ENCODE measurements at regions of chr1 and their contacts with region 1.

Region 1: DNA sequence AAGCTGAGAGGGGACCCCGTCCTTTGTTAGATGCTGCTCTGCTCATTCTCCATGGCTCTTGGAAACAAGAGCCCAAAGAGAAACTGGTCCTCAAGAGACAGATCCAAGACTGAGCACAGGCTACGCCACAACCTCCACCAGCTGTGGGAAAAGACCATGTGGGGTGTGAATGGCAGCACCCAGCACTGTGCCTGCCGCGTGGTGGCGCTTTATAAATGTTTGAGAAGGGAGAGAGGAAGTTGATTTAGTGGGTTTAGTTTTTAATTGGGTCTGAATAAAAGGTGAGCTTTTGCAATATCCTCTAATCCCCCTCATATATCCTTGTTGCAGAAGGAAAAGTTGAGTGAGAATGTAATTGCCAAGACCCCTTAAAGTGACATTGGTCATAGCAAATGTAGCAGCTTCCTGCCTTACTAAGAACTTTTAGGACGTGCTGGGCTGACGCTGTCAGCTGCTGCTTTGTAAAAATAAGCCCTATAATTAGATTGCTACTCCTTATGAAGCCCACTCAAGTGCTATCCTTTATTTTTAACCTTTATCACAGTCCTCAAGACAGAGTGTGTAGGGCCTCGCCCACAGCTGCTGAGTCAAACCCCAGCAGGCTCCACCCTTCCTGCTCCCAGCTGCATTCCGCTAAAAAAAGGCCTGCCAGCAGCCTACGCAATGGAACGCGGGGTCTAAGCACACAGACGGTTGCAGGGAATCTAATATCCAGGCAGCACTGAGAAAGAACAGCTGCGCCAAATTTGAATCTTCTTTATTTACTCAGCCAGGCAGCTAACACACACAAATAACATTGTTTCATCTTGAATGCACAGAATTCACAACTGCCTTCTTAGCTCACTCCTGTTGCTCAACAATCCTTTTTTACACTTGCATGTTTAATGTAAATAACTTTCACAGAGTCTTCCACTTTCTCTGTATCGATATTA is 47.4 kb upstream of the PRDX6 start:
- DNase-seq: peak; percentile 50 to 62 (median 59)
- H3K4me3 ChIP-seq: peak overlapping the region in 1 of 2 donors; percentile 26
- H3K4me3 Mint-ChIP-seq: peak overlapping the region; percentile 14 to 76 (median 60)
- H3K27ac ChIP-seq: peak overlapping the region; percentile 11
- H3K27ac Mint-ChIP-seq: peak overlapping the region; percentile 22 to 87 (median 75)
- H3K4me1 ChIP-seq: peaks cover 17% of the 10 kb centered on the region
- H3K4me1 Mint-ChIP-seq: peaks cover 16 to 26% (median 16%) of the 10 kb centered on the region in 4 donors
- H3K27me3 ChIP-seq: no peaks in the 10 kb centered on the region
- H3K27me3 Mint-ChIP-seq: no peaks in the 10 kb centered on the region

Region 2: DNA sequence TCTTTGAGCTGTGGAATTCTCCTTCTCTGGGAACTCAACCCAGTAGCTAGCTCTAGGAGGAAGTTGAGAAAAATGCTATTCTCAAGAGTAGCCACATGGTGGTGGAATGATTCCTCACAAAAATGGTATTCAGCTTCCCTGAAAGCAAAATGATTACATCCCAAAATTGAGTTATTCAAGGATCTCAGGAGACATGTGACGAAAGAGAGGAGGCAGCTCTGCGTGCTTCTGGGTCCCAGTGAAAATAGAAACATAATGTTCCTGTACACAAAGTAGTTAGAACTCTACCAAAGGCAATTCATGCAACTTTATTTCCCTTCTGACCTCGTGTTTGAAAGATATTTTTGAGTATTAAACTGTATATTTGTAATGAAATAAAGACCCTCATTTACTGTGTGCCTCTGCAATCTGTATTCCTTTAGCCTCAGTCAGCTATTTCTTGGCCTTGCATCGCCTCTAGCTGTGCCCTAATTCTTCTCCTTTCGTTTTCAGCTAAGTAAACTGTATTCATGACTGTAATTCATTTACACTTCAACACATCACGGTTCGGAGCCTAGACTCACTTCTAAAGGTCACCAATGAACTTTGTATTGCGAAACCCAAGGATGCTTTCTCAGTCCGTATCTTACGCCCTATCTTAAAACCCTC is 603.5 kb before region 1 on chr1:
- CTCF ChIA-PET with region 1: interaction called, 12 read pairs
- POLR2A ChIA-PET with region 1: no interaction called
- intact Hi-C with region 1: no loop called
- DNase-seq: peak in 1 of 5 donors; percentile 15
- H3K4me3 ChIP-seq: no peak overlapping the region
- H3K4me3 Mint-ChIP-seq: no peak overlapping the region
- H3K27ac ChIP-seq: no peak overlapping the region
- H3K27ac Mint-ChIP-seq: no peak overlapping the region
- H3K4me1 ChIP-seq: peaks cover 24% of the 10 kb centered on the region
- H3K4me1 Mint-ChIP-seq: no peaks in the 10 kb centered on the region
- H3K27me3 ChIP-seq: no peaks in the 10 kb centered on the region
- H3K27me3 Mint-ChIP-seq: no peaks in the 10 kb centered on the region

Region 3: GRCh38 chr1:173341307-173341706 is 88.4 kb before region 1 on chr1:
- CTCF ChIA-PET with region 1: no interaction called
- POLR2A ChIA-PET with region 1: no interaction called
- intact Hi-C with region 1: no loop called
- DNase-seq: no peak
- H3K4me3 ChIP-seq: no peak overlapping the region
- H3K4me3 Mint-ChIP-seq: no peak overlapping the region
- H3K27ac ChIP-seq: no peak overlapping the region
- H3K27ac Mint-ChIP-seq: no peak overlapping the region
- H3K4me1 ChIP-seq: no peaks in the 10 kb centered on the region
- H3K4me1 Mint-ChIP-seq: no peaks in the 10 kb centered on the region
- H3K27me3 ChIP-seq: no peaks in the 10 kb centered on the region
- H3K27me3 Mint-ChIP-seq: no peaks in the 10 kb centered on the region

Region 4: GRCh38 chr1:173476664-173477285 is 47.0 kb after region 1 on chr1:
- CTCF ChIA-PET with region 1: interaction called, 41 read pairs
- POLR2A ChIA-PET with region 1: interaction called, 17 read pairs
- intact Hi-C with region 1: loop called (anchors 1 kb)
- DNase-seq: peak; percentile 77 to 90 (median 84)
- H3K4me3 ChIP-seq: peak overlapping the region; percentile 93
- H3K4me3 Mint-ChIP-seq: peak overlapping the region; percentile 89 to 94 (median 91)
- H3K27ac ChIP-seq: peak overlapping the region; percentile 89
- H3K27ac Mint-ChIP-seq: peak overlapping the region; percentile 89 to 95 (median 91)
- H3K4me1 ChIP-seq: peaks cover 61% of the 10 kb centered on the region
- H3K4me1 Mint-ChIP-seq: peaks cover 38 to 68% (median 55%) of the 10 kb centered on the region in 4 donors
- H3K27me3 ChIP-seq: no peaks in the 10 kb centered on the region
- H3K27me3 Mint-ChIP-seq: no peaks in the 10 kb centered on the region

Region 5: GRCh38 chr1:173554541-173555250 is 125.0 kb after region 1 on chr1:
- CTCF ChIA-PET with region 1: no interaction called
- POLR2A ChIA-PET with region 1: no interaction called
- intact Hi-C with region 1: no loop called
- DNase-seq: no peak
- H3K4me3 ChIP-seq: no peak overlapping the region
- H3K4me3 Mint-ChIP-seq: no peak overlapping the region
- H3K27ac ChIP-seq: no peak overlapping the region
- H3K27ac Mint-ChIP-seq: peak overlapping the region in 1 of 7 donors; percentile 15
- H3K4me1 ChIP-seq: peaks cover 32% of the 10 kb centered on the region
- H3K4me1 Mint-ChIP-seq: peaks cover 24 to 52% (median 37%) of the 10 kb centered on the region in 4 donors
- H3K27me3 ChIP-seq: no peaks in the 10 kb centered on the region
- H3K27me3 Mint-ChIP-seq: no peaks in the 10 kb centered on the region

Region 6: GRCh38 chr1:173628888-173629287 is 199.2 kb after region 1 on chr1:
- CTCF ChIA-PET with region 1: no interaction called
- POLR2A ChIA-PET with region 1: no interaction called
- intact Hi-C with region 1: loop called (anchors 2 kb)
- DNase-seq: no peak
- H3K4me3 ChIP-seq: no peak overlapping the region
- H3K4me3 Mint-ChIP-seq: no peak overlapping the region
- H3K27ac ChIP-seq: no peak overlapping the region
- H3K27ac Mint-ChIP-seq: no peak overlapping the region
- H3K4me1 ChIP-seq: no peaks in the 10 kb centered on the region
- H3K4me1 Mint-ChIP-seq: no peaks in the 10 kb centered on the region
- H3K27me3 ChIP-seq: no peaks in the 10 kb centered on the region
- H3K27me3 Mint-ChIP-seq: peaks cover 0 to 5% of the 10 kb centered on the region in 2 donors

Region 7: DNA sequence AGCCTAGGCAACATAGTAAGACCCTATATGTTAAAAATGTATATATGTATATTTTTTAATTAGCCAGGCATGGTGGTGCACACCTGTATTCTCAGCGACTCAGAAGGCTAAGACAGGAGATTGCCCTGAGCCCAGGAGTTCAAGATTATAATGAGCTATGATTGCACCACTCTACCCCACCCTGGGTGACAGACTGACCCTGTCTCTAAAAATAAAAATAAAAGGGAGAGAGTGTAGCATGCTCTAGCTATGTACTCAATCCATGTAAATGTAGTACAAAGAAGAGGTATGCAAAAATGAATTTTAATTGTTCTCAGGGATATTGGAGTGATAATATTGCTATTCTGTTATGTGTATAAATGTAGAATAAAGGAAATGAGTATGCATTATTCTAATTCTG is 341.8 kb after region 1 on chr1:
- CTCF ChIA-PET with region 1: interaction called, 11 read pairs
- POLR2A ChIA-PET with region 1: no interaction called
- intact Hi-C with region 1: loop called (anchors 5 kb)
- DNase-seq: no peak
- H3K4me3 ChIP-seq: no peak overlapping the region
- H3K4me3 Mint-ChIP-seq: no peak overlapping the region
- H3K27ac ChIP-seq: no peak overlapping the region
- H3K27ac Mint-ChIP-seq: peak overlapping the region in 2 of 7 donors; percentile 14 to 48
- H3K4me1 ChIP-seq: peaks cover 19% of the 10 kb centered on the region
- H3K4me1 Mint-ChIP-seq: peaks cover 17 to 25% (median 22%) of the 10 kb centered on the region in 4 donors
- H3K27me3 ChIP-seq: no peaks in the 10 kb centered on the region
- H3K27me3 Mint-ChIP-seq: no peaks in the 10 kb centered on the region

Region 8: GRCh38 chr1:173824331-173825081 is 394.8 kb after region 1 on chr1 and contains the starts of genes CENPL and DARS2:
- CTCF ChIA-PET with region 1: interaction called, 70 read pairs
- POLR2A ChIA-PET with region 1: interaction called, 28 read pairs
- intact Hi-C with region 1: no loop called
- DNase-seq: peak; percentile 92 to 96 (median 93)
- H3K4me3 ChIP-seq: peak within 1 kb of the TSS; percentile 93 to 95
- H3K4me3 Mint-ChIP-seq: peak within 1 kb of the TSS; percentile 93 to 99 (median 97)
- H3K27ac ChIP-seq: peak within 1 kb of the TSS; percentile 79
- H3K27ac Mint-ChIP-seq: peak within 1 kb of the TSS; percentile 97 to 99 (median 97)
- H3K4me1 ChIP-seq: peaks cover 18% of the 10 kb centered on the region
- H3K4me1 Mint-ChIP-seq: peaks cover 27 to 46% (median 33%) of the 10 kb centered on the region in 4 donors
- H3K27me3 ChIP-seq: no peaks in the 10 kb centered on the region
- H3K27me3 Mint-ChIP-seq: no peaks in the 10 kb centered on the region
- total RNA-seq, gene CENPL: 9.0 to 10.2 TPM
- total RNA-seq, gene DARS2: 13.4 to 13.5 TPM

Region 9: GRCh38 chr1:173937062-173937461 is 507.3 kb after region 1 on chr1:
- CTCF ChIA-PET with region 1: no interaction called
- POLR2A ChIA-PET with region 1: no interaction called
- intact Hi-C with region 1: loop called (anchors 10 kb)
- DNase-seq: no peak
- H3K4me3 ChIP-seq: no peak overlapping the region
- H3K4me3 Mint-ChIP-seq: no peak overlapping the region
- H3K27ac ChIP-seq: no peak overlapping the region
- H3K27ac Mint-ChIP-seq: no peak overlapping the region
- H3K4me1 ChIP-seq: no peaks in the 10 kb centered on the region
- H3K4me1 Mint-ChIP-seq: no peaks in the 10 kb centered on the region
- H3K27me3 ChIP-seq: no peaks in the 10 kb centered on the region
- H3K27me3 Mint-ChIP-seq: no peaks in the 10 kb centered on the region